Dorsolateral prefrontal cortex (tissue), 120 donors: ENCODE measurements at regions of chr7 and their contacts with region 1.

Region 1: GRCh38 chr7:140653319-140654108 is 12.9 kb upstream of the DENND2A start:
- DNase-seq: peak in 3 of 10 donors; percentile 49 to 75 (median 58)
- H3K4me3 ChIP-seq: peak overlapping the region in 17 of 59 donors; percentile 6 to 47 (median 32)
- H3K27ac ChIP-seq: no peak overlapping the region
- H3K27me3 ChIP-seq: no peaks in the 10 kb centered on the region
- CTCF ChIP-seq: peak; percentile 76 to 98 (median 90)

Region 2: GRCh38 chr7:140479062-140479738 is 174.3 kb before region 1 on chr7 and contains the start of gene MKRN1:
- intact Hi-C with region 1: loop called in 1 of 2 experiments (anchors 5 kb)
- DNase-seq: peak; percentile 87 to 98 (median 96)
- H3K4me3 ChIP-seq: peak within 1 kb of the TSS; percentile 66 to 100 (median 94)
- H3K27ac ChIP-seq: peak within 1 kb of the TSS; percentile 17 to 95 (median 86)
- H3K27me3 ChIP-seq: no peaks in the 10 kb centered on the region
- CTCF ChIP-seq: peak in 23 of 56 donors; percentile 0 to 55 (median 23)
- total RNA-seq, gene MKRN1: 64.7 to 117 (median 91.9) TPM

Region 3: DNA sequence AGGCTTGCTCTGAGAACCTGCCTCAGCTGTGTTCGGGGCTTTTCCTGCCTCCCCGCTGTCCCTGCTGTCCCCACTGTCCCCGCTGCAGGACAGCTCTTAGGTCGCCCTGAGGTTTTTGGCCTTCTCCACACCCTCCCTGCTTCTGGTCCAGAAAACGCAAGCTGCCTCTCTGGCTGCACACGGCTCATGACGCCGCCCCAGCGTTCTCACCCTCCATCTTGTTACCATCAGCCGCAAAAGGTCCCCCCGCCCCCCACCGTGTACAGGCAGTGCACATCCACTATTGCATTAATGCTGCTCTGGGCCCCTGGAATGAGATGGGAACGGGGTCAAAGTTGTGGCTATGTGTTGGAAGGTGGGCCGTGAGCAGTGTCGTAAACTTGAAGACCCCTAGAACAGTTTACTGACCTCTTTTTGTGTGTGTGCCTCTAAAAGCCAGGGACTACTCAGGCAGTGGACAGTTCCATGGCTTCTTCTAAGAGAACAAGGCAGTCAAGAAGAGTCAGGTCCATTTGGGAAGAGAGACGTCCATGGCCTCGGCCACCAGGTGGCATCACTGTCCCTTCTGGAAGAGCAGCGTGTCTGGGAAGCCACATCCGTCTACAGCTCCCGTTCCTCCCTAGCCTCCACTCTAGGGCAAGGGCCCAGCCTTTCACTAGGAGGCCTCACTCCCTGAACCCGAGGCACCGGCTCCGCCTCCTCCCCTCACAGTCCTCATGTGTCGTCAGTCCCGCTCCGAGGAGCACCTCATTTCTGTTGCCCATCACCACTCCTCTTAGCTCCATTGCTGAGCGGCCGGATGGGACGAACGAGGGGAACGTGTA is 135.8 kb before region 1 on chr7:
- intact Hi-C with region 1: loop called (anchors 1 kb)
- DNase-seq: peak; percentile 84 to 92 (median 89)
- H3K4me3 ChIP-seq: no peak overlapping the region
- H3K27ac ChIP-seq: peak overlapping the region in 3 of 59 donors; percentile 19 to 51 (median 21)
- H3K27me3 ChIP-seq: no peaks in the 10 kb centered on the region
- CTCF ChIP-seq: peak; percentile 47 to 96 (median 90)

Region 4: GRCh38 chr7:141262101-141263090 is 608.9 kb after region 1 on chr7:
- intact Hi-C with region 1: no loop called
- DNase-seq: peak in 2 of 10 donors; percentile 13 to 49
- H3K4me3 ChIP-seq: peak overlapping the region in 4 of 59 donors; percentile 4 to 8 (median 4)
- H3K27ac ChIP-seq: peak overlapping the region in 31 of 59 donors; percentile 0 to 64 (median 39)
- H3K27me3 ChIP-seq: no peaks in the 10 kb centered on the region
- CTCF ChIP-seq: peak in 55 of 56 donors; percentile 14 to 66 (median 49)